ENCODE measurements at regions of chr3 and their contacts with region 1.

Region 1: GRCh38 chr3:177359593-177360357 is 162.5 kb upstream of the TBL1XR1 start:
- DNase-seq: peak; percentile 94 to 97
- H3K4me3 ChIP-seq: peak overlapping the region; percentile 39
- H3K4me3 Mint-ChIP-seq: peak overlapping the region; percentile 77
- H3K27ac Mint-ChIP-seq: peak overlapping the region; percentile 89
- H3K4me1 ChIP-seq: peaks cover 39% of the 10 kb centered on the region
- H3K4me1 Mint-ChIP-seq: peaks cover 45% of the 10 kb centered on the region
- H3K27me3 ChIP-seq: no peaks in the 10 kb centered on the region
- H3K27me3 Mint-ChIP-seq: no peaks in the 10 kb centered on the region
- CTCF ChIP-seq: no peak

Region 2: DNA sequence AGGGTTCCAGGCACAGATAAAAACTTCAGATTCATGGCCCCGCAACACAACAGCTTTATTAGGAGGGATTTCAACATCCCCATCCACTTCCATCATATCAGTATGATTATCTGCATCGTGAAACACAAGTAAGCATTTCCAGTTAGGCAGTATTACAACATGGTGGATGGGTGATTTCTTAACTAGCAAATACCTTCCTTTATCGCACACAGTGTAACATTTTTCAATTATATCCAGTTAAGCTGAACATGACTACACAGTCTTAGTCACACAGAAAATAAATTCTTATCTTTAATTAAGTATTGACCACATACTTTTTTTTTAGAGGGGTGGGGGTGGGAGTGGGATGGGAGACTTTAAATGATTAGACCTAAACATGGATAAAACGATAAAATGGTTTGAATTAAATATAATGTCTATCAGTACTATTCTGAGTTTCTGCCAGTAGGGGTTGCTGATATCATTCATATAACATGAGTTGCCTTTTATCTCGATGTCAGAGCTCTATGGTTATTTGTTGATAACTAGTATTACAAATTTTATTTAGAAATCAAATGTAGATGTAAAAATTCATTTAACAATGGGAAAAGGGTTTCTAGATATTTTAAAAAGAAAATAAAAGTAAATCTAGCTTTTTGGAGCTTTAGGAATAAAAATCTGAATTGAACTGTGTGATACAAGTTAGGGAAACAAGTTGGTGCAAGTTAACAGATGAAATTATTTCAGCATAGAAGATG is 309.1 kb before region 1 on chr3:
- CTCF ChIA-PET with region 1: interaction called, 7 read pairs
- POLR2A ChIA-PET with region 1: no interaction called
- intact Hi-C with region 1: loop called (anchors 2 kb)
- DNase-seq: peak in 1 of 2 experiments; percentile 17
- H3K4me3 ChIP-seq: no peak overlapping the region
- H3K4me3 Mint-ChIP-seq: no peak overlapping the region
- H3K27ac Mint-ChIP-seq: no peak overlapping the region
- H3K4me1 ChIP-seq: no peaks in the 10 kb centered on the region
- H3K4me1 Mint-ChIP-seq: peaks cover 6% of the 10 kb centered on the region
- H3K27me3 ChIP-seq: no peaks in the 10 kb centered on the region
- H3K27me3 Mint-ChIP-seq: no peaks in the 10 kb centered on the region
- CTCF ChIP-seq: peak; percentile 18 to 38

Region 3: GRCh38 chr3:177284383-177284881 is 75.3 kb before region 1 on chr3:
- CTCF ChIA-PET with region 1: no interaction called
- POLR2A ChIA-PET with region 1: interaction called, 3 read pairs
- intact Hi-C with region 1: loop called (anchors 2 kb)
- DNase-seq: peak; percentile 43 to 58
- H3K4me3 ChIP-seq: no peak overlapping the region
- H3K4me3 Mint-ChIP-seq: no peak overlapping the region
- H3K27ac Mint-ChIP-seq: no peak overlapping the region
- H3K4me1 ChIP-seq: peaks cover 72% of the 10 kb centered on the region
- H3K4me1 Mint-ChIP-seq: peaks cover 22% of the 10 kb centered on the region
- H3K27me3 ChIP-seq: no peaks in the 10 kb centered on the region
- H3K27me3 Mint-ChIP-seq: no peaks in the 10 kb centered on the region
- CTCF ChIP-seq: no peak

Region 4: DNA sequence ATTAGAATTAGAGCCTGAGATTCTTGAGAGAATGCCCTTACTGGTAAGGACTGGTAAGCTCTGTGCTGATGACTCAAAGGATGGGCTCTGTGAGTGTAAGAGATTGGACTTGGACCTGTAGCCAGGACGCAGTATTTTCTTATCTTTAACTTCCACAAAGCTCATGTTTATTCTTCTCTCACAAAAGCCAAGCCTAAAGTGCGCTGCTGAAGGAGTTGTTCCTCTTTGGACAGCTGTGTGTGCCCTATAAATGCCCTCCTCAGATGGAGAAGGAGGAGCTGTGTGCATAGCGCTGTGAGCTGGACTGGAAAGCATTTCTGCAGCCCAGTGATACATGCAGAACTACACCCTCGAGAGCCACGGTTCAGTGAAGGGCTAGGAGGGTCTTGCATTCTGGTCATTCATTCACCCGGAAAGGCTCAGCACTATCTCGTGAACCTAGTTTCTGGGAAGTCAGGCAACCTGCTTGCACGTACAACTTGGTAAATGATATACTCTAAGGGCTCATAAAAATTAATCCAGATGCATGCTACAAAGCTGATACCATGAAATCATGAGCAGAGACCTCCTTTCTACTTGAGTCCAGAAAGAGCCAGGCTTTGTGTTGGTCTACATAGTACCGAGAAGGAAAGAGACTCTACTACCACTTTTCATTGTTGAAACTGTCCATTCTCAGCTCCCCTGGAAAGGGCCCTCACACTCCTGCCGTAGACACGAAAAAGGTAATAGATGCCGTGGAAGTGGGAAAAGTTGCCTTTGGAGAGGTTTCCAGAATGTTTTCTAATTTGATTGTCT is 59.5 kb before region 1 on chr3:
- CTCF ChIA-PET with region 1: no interaction called
- POLR2A ChIA-PET with region 1: interaction called, 11 read pairs
- intact Hi-C with region 1: loop called (anchors 1 kb)
- DNase-seq: peak; percentile 79 to 95
- H3K4me3 ChIP-seq: peak overlapping the region; percentile 34
- H3K4me3 Mint-ChIP-seq: peak overlapping the region; percentile 68
- H3K27ac Mint-ChIP-seq: peak overlapping the region; percentile 82
- H3K4me1 ChIP-seq: peaks cover 30% of the 10 kb centered on the region
- H3K4me1 Mint-ChIP-seq: peaks cover 6% of the 10 kb centered on the region
- H3K27me3 ChIP-seq: no peaks in the 10 kb centered on the region
- H3K27me3 Mint-ChIP-seq: no peaks in the 10 kb centered on the region
- CTCF ChIP-seq: no peak

Region 5: GRCh38 chr3:177330779-177331178 is 29.0 kb before region 1 on chr3:
- CTCF ChIA-PET with region 1: no interaction called
- POLR2A ChIA-PET with region 1: no interaction called
- intact Hi-C with region 1: no loop called
- DNase-seq: no peak
- H3K4me3 ChIP-seq: no peak overlapping the region
- H3K4me3 Mint-ChIP-seq: no peak overlapping the region
- H3K27ac Mint-ChIP-seq: no peak overlapping the region
- H3K4me1 ChIP-seq: no peaks in the 10 kb centered on the region
- H3K4me1 Mint-ChIP-seq: no peaks in the 10 kb centered on the region
- H3K27me3 ChIP-seq: no peaks in the 10 kb centered on the region
- H3K27me3 Mint-ChIP-seq: no peaks in the 10 kb centered on the region
- CTCF ChIP-seq: no peak

Region 6: DNA sequence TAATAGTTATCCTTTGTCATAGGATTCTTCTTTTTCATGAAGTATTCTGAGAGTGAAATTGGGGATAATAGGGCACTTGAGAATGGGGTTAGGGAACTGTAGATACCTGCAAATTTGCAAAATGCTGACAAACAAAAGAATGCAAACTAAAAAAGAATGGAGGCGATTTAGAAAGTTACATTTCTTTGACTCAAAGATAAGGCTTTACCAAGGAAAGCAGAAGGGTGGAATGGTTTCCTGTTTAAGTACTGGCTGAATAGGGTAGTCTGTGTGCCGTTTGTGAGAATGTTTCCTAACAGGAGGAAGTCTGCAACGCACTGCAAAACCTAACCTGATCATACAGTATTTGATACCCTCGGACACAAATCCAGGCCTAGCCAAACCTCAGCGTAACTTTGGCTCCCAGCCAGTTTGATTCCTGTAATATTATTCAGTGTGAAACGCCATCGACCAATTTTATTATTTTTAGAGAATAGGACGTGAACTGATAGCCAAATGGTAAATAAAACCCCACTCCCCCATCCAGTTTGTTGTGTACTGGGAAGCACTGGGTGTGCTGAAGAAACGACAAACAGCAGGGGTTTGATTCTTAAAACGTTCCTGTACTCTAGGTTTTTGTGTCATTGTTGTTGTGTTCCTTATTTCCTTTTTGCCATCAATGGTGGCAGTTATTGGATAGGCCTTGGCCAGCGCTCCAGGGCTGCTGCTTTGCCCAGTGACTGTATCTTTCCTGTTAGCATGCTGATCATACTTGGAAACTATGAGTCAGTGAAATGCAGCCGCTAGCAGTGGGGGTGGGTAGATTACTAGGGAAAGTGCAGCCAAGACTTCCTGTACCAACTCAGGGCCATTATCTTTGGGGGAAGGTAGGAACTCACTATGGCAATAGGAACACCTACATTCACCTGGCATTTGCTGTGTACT is 14.5 kb before region 1 on chr3:
- CTCF ChIA-PET with region 1: no interaction called
- POLR2A ChIA-PET with region 1: interaction called, 3 read pairs
- intact Hi-C with region 1: loop called (anchors 1 kb)
- DNase-seq: peak; percentile 69 to 78
- H3K4me3 ChIP-seq: no peak overlapping the region
- H3K4me3 Mint-ChIP-seq: no peak overlapping the region
- H3K27ac Mint-ChIP-seq: peak overlapping the region; percentile 63
- H3K4me1 ChIP-seq: peaks cover 46% of the 10 kb centered on the region
- H3K4me1 Mint-ChIP-seq: peaks cover 35% of the 10 kb centered on the region
- H3K27me3 ChIP-seq: no peaks in the 10 kb centered on the region
- H3K27me3 Mint-ChIP-seq: no peaks in the 10 kb centered on the region
- CTCF ChIP-seq: no peak

Measured in Caco-2 (cell line).